ENCODE measurements at regions of chr11 and their contacts with region 1.

Region 1: DNA sequence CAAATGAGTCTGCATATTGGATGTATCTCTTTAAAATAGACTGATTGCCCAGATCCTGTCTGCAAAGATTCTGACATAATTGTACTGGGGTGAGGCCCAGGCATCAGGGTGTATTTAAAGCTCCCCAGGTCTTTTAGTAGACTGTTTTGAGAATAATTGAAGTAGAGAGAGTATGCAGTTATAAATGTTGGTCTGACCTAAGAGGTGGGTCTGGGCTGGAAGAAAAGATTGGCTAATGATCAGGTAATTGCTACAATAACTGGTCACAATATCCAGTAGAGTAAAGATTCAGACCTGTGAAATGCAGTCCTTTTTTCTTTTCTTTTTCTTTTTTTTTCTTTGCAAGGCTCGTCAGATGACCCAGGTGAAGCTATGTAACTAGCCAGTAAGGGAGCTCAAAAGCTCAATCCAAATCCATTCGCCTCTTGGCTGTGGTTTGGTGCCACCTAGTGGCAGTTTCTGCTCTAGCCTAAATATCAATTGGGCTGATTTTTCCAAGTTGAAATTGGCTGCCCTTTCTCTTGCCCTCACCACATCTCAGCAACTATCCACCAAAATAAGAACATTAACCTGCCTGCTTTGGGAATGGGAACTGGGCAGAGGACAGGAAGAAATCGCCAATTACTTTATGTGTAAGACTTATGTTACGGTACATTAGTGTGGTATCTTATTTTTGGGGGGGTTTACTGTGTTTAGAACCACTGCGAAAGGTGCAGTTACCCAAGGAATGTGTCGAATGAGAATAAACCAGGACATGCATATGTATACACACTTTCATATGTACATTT is 45.9 kb downstream of the ZNF143 start:
- DNase-seq: peak; percentile 84
- H3K4me3 ChIP-seq: no peak overlapping the region
- H3K27ac ChIP-seq: no peak overlapping the region
- H3K4me1 ChIP-seq: no peaks in the 10 kb centered on the region
- H3K27me3 ChIP-seq: no peaks in the 10 kb centered on the region
- CTCF ChIP-seq: peak; percentile 69 to 88
- POLR2A ChIP-seq: no peak

Region 2: GRCh38 chr11:8709002-8709672 is 797.5 kb before region 1 on chr11:
- CTCF ChIA-PET with region 1: no interaction called
- POLR2A ChIA-PET with region 1: no interaction called
- dilution Hi-C with region 1: no loop called
- intact Hi-C with region 1: no loop called
- DNase-seq: no peak
- H3K4me3 ChIP-seq: no peak overlapping the region
- H3K27ac ChIP-seq: no peak overlapping the region
- H3K4me1 ChIP-seq: peaks cover 5% of the 10 kb centered on the region
- H3K27me3 ChIP-seq: no peaks in the 10 kb centered on the region
- CTCF ChIP-seq: no peak
- POLR2A ChIP-seq: no peak

Region 3: DNA sequence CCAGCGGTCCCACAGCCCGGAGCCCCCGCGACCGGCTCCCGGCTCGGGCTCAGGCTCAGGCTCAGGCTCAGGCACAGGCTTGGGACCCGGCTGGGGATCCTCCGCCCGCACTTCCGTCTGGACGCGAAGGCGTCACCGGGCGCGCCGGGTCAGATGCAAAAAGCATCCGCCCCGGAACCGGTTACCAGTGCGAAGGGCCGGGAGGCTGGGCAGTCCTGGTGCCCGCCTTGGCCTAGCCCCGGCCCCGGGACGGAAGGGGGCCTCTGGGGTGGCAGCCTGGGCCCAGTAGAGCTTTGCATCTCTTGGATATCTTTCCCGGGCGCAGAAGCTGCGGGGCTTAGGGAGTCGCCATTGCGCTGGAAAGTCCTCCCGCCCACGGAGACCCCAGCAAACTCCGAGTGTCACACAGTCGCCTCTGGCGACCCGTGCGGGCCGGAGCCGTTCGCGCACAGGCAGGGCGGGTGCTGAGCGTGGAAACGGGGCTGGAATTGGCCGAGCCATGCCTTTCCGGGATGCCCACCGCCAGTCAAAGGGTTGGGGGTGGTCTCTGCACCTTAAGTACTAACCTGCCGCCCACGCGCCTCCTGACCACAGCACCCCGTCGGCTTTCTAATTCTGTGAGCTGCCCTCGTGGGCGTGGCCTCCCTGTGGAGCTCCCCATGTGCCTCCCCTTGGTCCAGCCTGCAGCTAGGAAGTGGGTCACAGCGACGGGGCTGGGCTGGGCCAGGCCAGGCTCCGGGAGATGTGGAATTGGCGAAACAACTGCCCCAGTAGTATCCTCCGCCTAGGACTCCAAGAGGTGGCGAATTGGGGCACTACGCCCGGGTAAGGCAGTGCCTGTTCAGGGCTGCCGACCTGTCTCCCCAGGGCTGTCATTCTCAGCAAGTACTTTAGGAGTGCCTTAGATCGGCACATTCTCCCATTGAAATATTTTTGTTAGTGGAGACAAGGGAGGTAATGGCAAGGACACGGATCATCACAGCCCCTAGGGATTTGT is 542.1 kb before region 1 on chr11 and contains the start of gene TMEM9B:
- CTCF ChIA-PET with region 1: interaction called, 26 read pairs
- POLR2A ChIA-PET with region 1: no interaction called
- dilution Hi-C with region 1: no loop called
- intact Hi-C with region 1: loop called (anchors 5 kb)
- DNase-seq: peak; percentile 83
- H3K4me3 ChIP-seq: peak within 1 kb of the TSS; percentile 71 to 91 (median 81)
- H3K27ac ChIP-seq: peak within 1 kb of the TSS; percentile 88
- H3K4me1 ChIP-seq: peaks cover 15% of the 10 kb centered on the region
- H3K27me3 ChIP-seq: no peaks in the 10 kb centered on the region
- CTCF ChIP-seq: no peak
- POLR2A ChIP-seq: peak; percentile 96
- total RNA-seq, gene TMEM9B: 27.1 and 30.2 TPM in 2 replicates

Region 4: GRCh38 chr11:9158898-9159391 is 347.7 kb before region 1 on chr11:
- CTCF ChIA-PET with region 1: interaction called, 35 read pairs
- POLR2A ChIA-PET with region 1: no interaction called
- dilution Hi-C with region 1: no loop called
- intact Hi-C with region 1: no loop called
- DNase-seq: peak; percentile 38
- H3K4me3 ChIP-seq: no peak overlapping the region
- H3K27ac ChIP-seq: peak overlapping the region; percentile 54
- H3K4me1 ChIP-seq: peaks cover 29% of the 10 kb centered on the region
- H3K27me3 ChIP-seq: no peaks in the 10 kb centered on the region
- CTCF ChIP-seq: no peak
- POLR2A ChIP-seq: no peak

Region 5: GRCh38 chr11:9253086-9253485 is 253.6 kb before region 1 on chr11:
- CTCF ChIA-PET with region 1: no interaction called
- POLR2A ChIA-PET with region 1: no interaction called
- dilution Hi-C with region 1: no loop called
- intact Hi-C with region 1: no loop called
- DNase-seq: peak; percentile 78
- H3K4me3 ChIP-seq: peak overlapping the region in 1 of 3 experiments; percentile 35
- H3K27ac ChIP-seq: peak overlapping the region; percentile 76
- H3K4me1 ChIP-seq: peaks cover 35% of the 10 kb centered on the region
- H3K27me3 ChIP-seq: no peaks in the 10 kb centered on the region
- CTCF ChIP-seq: no peak
- POLR2A ChIP-seq: no peak

Region 6: GRCh38 chr11:9363954-9364912 is 142.4 kb before region 1 on chr11:
- CTCF ChIA-PET with region 1: no interaction called
- POLR2A ChIA-PET with region 1: no interaction called
- dilution Hi-C with region 1: no loop called
- intact Hi-C with region 1: no loop called
- DNase-seq: peak; percentile 96
- H3K4me3 ChIP-seq: peak overlapping the region in 2 of 3 experiments; percentile 23 to 46
- H3K27ac ChIP-seq: peak overlapping the region; percentile 92
- H3K4me1 ChIP-seq: peaks cover 17% of the 10 kb centered on the region
- H3K27me3 ChIP-seq: no peaks in the 10 kb centered on the region
- CTCF ChIP-seq: no peak
- POLR2A ChIP-seq: peak; percentile 67

Region 7: GRCh38 chr11:9460322-9461067 is 46.2 kb before region 1 on chr11 and contains the start of gene ZNF143:
- CTCF ChIA-PET with region 1: interaction called, 8 read pairs
- POLR2A ChIA-PET with region 1: interaction called, 5 read pairs
- dilution Hi-C with region 1: no loop called
- intact Hi-C with region 1: loop called (anchors 1 kb)
- DNase-seq: peak; percentile 100
- H3K4me3 ChIP-seq: peak within 1 kb of the TSS; percentile 92 to 97 (median 94)
- H3K27ac ChIP-seq: peak within 1 kb of the TSS; percentile 95
- H3K4me1 ChIP-seq: peaks cover 15% of the 10 kb centered on the region
- H3K27me3 ChIP-seq: no peaks in the 10 kb centered on the region
- CTCF ChIP-seq: no peak
- POLR2A ChIP-seq: peak; percentile 72
- total RNA-seq, gene ZNF143: 19.0 and 22.1 TPM in 2 replicates

Region 8: GRCh38 chr11:9489080-9489765 is 17.5 kb before region 1 on chr11:
- CTCF ChIA-PET with region 1: interaction called, 19 read pairs
- POLR2A ChIA-PET with region 1: no interaction called
- dilution Hi-C with region 1: no loop called
- intact Hi-C with region 1: no loop called
- DNase-seq: no peak
- H3K4me3 ChIP-seq: no peak overlapping the region
- H3K27ac ChIP-seq: no peak overlapping the region
- H3K4me1 ChIP-seq: peaks cover 5% of the 10 kb centered on the region
- H3K27me3 ChIP-seq: no peaks in the 10 kb centered on the region
- CTCF ChIP-seq: no peak
- POLR2A ChIP-seq: no peak

Region 9: DNA sequence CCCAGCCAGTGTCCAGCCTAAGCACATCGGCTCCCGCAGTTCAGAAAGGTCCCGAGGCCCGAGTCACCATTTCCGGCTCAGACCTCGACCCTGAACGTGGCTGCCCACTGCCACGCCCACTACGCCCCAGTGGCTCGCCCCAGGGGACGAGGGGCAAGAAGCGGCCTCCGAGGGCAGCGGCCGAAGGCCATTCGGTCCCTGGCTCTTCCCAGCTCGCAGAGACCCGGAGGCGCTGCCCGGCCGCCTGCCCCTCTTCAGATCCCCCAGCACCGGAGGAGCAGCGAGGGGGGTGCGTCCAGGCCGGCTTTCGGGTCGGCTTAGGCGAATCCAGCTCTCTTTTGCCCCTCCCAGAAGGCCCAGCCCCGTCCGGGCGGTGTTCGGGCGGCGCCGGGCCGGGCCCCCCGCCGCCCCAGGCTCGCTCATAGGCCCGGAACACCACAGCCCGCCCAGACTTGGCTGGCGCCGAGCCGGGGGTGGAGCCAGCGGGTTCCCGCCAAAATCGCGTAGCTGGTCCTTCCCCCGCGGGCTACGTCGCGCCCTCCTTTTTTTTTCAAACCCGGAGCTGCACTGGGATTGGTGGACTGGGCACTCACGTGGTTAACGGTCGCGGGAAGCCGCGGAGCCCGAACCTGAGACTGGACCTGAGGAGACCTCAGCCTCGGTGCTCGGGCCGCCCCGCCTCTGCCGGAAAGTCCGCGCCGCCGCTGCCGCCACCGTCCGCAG is 66.5 kb after region 1 on chr11 and contains the start of gene WEE1:
- CTCF ChIA-PET with region 1: interaction called, 22 read pairs
- POLR2A ChIA-PET with region 1: no interaction called
- dilution Hi-C with region 1: no loop called
- intact Hi-C with region 1: no loop called
- DNase-seq: peak; percentile 99
- H3K4me3 ChIP-seq: peak within 1 kb of the TSS; percentile 56 to 97 (median 63)
- H3K27ac ChIP-seq: peak within 1 kb of the TSS; percentile 83
- H3K4me1 ChIP-seq: peaks cover 34% of the 10 kb centered on the region
- H3K27me3 ChIP-seq: no peaks in the 10 kb centered on the region
- CTCF ChIP-seq: no peak
- POLR2A ChIP-seq: peak; percentile 50
- total RNA-seq, gene WEE1: 42.8 and 47.0 TPM in 2 replicates

Region 10: DNA sequence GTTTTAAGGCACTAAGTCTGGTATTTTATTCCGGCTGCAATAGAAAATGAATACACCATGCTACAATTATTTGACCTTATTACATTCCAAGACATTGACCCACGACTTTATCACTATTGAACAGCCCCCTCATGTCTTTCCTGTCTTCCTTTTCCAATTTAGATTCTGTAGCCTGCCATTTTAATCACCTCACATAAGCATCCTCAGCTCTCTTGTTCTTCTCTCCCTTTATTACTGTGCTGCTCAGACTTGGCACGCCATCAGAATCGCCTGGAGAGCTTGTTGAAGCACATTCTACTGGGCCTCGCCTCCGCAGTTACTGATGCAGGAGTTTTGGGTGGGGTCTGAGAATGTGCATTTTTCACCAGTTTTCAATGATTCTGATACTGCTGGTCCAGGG is 118.5 kb after region 1 on chr11:
- CTCF ChIA-PET with region 1: no interaction called
- POLR2A ChIA-PET with region 1: no interaction called
- dilution Hi-C with region 1: no loop called
- intact Hi-C with region 1: no loop called
- DNase-seq: peak; percentile 73
- H3K4me3 ChIP-seq: no peak overlapping the region
- H3K27ac ChIP-seq: peak overlapping the region; percentile 96
- H3K4me1 ChIP-seq: peaks cover 33% of the 10 kb centered on the region
- H3K27me3 ChIP-seq: no peaks in the 10 kb centered on the region
- CTCF ChIP-seq: no peak
- POLR2A ChIP-seq: no peak